Caco-2 (cell line): ENCODE measurements at regions of chr11 and their contacts with region 1.

Region 1: DNA sequence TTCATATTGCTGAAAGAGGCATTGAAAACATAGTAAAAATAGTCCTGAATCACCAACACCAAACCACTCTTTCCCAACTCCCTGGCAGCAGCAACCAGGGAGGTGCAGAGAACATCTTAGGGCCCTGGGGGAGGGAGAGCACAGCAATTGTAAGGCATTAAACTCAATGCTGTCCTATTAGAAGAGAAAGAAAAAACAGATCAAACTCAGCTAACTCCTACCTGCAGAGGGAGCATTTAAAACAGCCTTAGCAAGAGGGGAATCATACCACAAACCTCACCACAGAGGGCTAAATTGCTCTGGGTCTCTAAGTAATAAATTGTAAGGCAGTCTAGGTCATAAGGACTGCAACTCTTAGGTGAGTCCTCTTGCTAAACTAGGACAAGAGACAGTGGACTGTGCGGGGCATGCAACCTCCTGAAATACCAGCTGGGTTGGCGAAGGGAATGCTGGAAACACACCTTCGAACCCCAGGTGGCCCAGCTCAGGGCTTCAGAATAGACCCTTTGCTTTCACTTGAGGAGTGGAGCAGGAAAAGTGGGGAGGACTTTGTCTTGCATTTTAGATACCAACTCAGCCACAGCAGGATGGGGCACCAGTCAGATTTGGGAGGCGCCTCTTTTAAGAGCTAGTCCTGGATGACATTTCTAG is 697.1 kb upstream of the FAT3 start:
- DNase-seq: peak in 1 of 2 experiments; percentile 11
- H3K4me3 ChIP-seq: no peak overlapping the region
- H3K4me3 Mint-ChIP-seq: no peak overlapping the region
- H3K27ac Mint-ChIP-seq: no peak overlapping the region
- H3K4me1 ChIP-seq: no peaks in the 10 kb centered on the region
- H3K4me1 Mint-ChIP-seq: no peaks in the 10 kb centered on the region
- H3K27me3 ChIP-seq: no peaks in the 10 kb centered on the region
- H3K27me3 Mint-ChIP-seq: no peaks in the 10 kb centered on the region
- CTCF ChIP-seq: peak in 1 of 2 experiments; percentile 11

Region 2: DNA sequence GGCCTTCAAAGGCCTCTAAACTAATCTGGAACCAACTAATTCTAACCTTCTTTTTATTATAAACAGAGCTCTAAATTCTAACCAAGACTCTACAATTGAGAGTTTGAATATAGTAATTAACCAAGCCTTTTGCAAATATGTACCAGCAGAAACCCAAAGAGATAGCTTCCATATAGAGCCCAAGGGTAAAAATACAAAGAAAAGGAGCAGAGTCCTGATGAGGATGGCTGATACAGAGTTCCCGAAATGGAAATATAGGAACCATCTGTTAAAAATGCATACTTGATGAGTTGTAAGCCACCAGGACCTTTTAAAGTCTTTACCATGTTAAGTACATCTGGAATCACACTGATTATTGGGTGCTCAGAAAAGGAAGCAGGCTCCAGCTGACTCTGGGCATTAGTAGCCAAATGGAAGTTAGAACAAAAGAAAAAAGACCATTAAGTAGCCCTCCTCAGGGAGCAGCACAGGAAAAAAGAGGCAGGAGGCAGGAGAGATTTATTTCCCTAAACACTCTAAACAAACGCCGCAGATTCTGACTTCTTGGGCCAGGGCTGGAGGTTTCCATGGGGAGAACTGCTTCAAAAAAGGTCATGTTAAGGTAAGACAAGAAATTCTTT is 234.0 kb after region 1 on chr11:
- CTCF ChIA-PET with region 1: no interaction called
- POLR2A ChIA-PET with region 1: no interaction called
- intact Hi-C with region 1: loop called (anchors 2 kb)
- DNase-seq: no peak
- H3K4me3 ChIP-seq: no peak overlapping the region
- H3K4me3 Mint-ChIP-seq: no peak overlapping the region
- H3K27ac Mint-ChIP-seq: no peak overlapping the region
- H3K4me1 ChIP-seq: no peaks in the 10 kb centered on the region
- H3K4me1 Mint-ChIP-seq: no peaks in the 10 kb centered on the region
- H3K27me3 ChIP-seq: no peaks in the 10 kb centered on the region
- H3K27me3 Mint-ChIP-seq: no peaks in the 10 kb centered on the region
- CTCF ChIP-seq: no peak

Region 3: DNA sequence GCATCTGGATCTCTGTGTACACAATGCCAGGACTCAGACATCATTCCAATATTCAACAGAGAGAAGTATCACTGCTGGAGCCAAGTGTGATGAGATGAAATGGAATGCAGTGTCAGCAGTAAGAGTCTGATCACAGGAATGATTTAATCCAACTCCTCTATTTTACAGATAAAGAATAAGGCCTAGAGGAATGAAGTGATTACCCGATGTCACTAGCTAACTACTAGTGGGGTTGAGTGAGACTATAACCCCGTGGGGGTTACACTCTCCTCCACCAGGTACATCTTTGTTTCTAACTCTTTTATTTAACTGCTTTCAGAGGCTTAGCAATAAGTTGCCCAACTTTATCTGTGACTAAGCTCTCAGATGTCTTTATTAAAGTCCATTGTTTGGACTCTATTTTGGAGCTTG is 602.9 kb after region 1 on chr11:
- CTCF ChIA-PET with region 1: no interaction called
- POLR2A ChIA-PET with region 1: no interaction called
- intact Hi-C with region 1: no loop called
- DNase-seq: no peak
- H3K4me3 ChIP-seq: no peak overlapping the region
- H3K4me3 Mint-ChIP-seq: no peak overlapping the region
- H3K27ac Mint-ChIP-seq: no peak overlapping the region
- H3K4me1 ChIP-seq: no peaks in the 10 kb centered on the region
- H3K4me1 Mint-ChIP-seq: no peaks in the 10 kb centered on the region
- H3K27me3 ChIP-seq: no peaks in the 10 kb centered on the region
- H3K27me3 Mint-ChIP-seq: no peaks in the 10 kb centered on the region
- CTCF ChIP-seq: no peak